ENCODE measurements at regions of chr19 and their contacts with region 1.

Region 1: DNA sequence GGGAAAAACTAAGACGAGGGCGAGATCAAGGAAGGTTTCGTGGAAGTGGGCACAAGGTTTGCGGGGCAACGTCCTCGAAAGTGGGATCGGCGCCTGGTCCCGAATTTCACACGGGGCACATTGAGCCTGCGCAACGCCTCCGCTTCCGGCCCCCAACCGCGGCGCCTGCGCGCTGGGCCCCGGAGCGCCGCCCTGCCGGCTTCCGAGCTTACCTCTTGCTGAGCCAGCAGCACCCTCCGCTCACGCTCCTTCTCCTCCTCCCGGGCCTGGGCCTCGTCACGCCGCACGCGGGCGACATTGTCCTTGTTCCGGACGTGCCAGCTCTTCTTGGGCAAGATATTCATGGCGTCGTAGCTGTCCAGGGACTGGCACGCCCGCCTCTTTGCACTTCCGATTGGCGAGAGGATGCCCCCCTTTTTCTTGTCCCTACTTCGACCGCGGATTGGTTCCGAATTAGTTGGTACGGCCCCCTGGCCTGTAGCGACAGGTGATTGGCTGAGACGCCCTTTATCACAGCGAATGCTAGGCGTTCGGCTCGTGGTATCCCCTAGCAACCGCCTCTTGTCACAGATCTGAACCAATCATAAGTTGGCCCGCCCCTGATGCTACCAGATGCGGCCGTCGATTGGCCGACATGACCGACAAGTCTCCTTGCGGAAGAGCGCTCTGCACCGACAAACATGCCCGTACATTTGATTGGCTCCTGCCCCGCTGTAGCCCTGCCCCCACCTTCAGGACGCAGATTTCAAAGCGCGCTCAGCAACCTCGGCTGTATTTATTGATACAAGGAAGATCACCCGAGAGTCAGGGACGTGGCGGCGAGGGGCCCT is at the start of gene LENG1:
- DNase-seq: peak; percentile 89 to 100 (median 99)
- ATAC-seq: peak; percentile 86 to 89
- H3K4me3 Mint-ChIP-seq: peak within 1 kb of the TSS; percentile 91 to 100 (median 100)
- H3K27ac Mint-ChIP-seq: peak within 1 kb of the TSS; percentile 99 to 100 (median 99)
- H3K4me1 Mint-ChIP-seq: peaks cover 32 to 77% (median 73%) of the 10 kb centered on the region in 4 donors
- H3K27me3 Mint-ChIP-seq: peaks cover 0 to 2% (median 0%) of the 10 kb centered on the region in 5 donors
- polyA plus RNA-seq, gene LENG1: 7.7 to 13.9 (median 9.3) TPM

Region 2: DNA sequence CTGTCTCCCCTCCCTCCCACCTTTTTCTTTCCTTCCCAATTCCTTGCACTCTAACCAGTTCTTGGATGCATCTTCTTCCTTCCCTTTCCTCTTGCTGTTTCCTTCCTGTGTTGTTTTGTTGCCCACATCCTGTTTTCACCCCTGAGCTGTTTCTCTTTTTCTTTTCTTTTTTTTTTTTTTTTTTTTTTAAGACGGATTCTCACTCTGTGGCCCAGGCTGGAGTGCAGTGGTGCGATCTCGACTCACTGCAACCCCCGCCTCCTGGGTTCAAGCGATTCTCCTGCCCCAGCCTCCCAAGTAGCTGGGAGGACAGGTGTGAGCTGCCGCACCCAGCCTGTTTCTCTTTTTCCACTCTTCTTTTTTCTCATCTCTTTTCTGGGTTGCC is 285.0 kb before region 1 on chr19:
- POLR2A ChIA-PET with region 1: no interaction called
- DNase-seq: peak in 3 of 10 donors; percentile 30 to 55 (median 55)
- ATAC-seq: peak in 1 of 2 donors; percentile 13
- H3K4me3 Mint-ChIP-seq: peak overlapping the region; percentile 63 to 83 (median 72)
- H3K27ac Mint-ChIP-seq: peak overlapping the region; percentile 94 to 99 (median 96)
- H3K4me1 Mint-ChIP-seq: peaks cover 39 to 83% (median 74%) of the 10 kb centered on the region in 4 donors
- H3K27me3 Mint-ChIP-seq: peaks cover 0 to 5% (median 0%) of the 10 kb centered on the region in 5 donors

Region 3: GRCh38 chr19:54115109-54116063 is 44.2 kb before region 1 on chr19 and contains the starts of genes PRPF31 and TFPT:
- POLR2A ChIA-PET with region 1: interaction called, 31 read pairs
- DNase-seq: peak; percentile 79 to 100 (median 96)
- ATAC-seq: peak; percentile 87 to 89
- H3K4me3 Mint-ChIP-seq: peak within 1 kb of the TSS; percentile 87 to 98 (median 93)
- H3K27ac Mint-ChIP-seq: peak within 1 kb of the TSS; percentile 89 to 99 (median 95)
- H3K4me1 Mint-ChIP-seq: peaks cover 16 to 50% (median 36%) of the 10 kb centered on the region in 4 donors
- H3K27me3 Mint-ChIP-seq: peaks cover 0 to 4% (median 0%) of the 10 kb centered on the region in 5 donors
- polyA plus RNA-seq, gene PRPF31: 64.0 to 82.4 (median 80.8) TPM
- polyA plus RNA-seq, gene TFPT: 17.4 to 24.4 (median 23.0) TPM

Region 4: GRCh38 chr19:54137086-54137921 is 22.3 kb before region 1 on chr19 and contains the start of gene CNOT3:
- POLR2A ChIA-PET with region 1: interaction called, 129 read pairs
- DNase-seq: peak; percentile 95 to 100 (median 100)
- ATAC-seq: peak; percentile 80
- H3K4me3 Mint-ChIP-seq: peak within 1 kb of the TSS; percentile 78 to 94 (median 91)
- H3K27ac Mint-ChIP-seq: peak within 1 kb of the TSS; percentile 87 to 98 (median 92)
- H3K4me1 Mint-ChIP-seq: peaks cover 29 to 54% (median 52%) of the 10 kb centered on the region in 4 donors
- H3K27me3 Mint-ChIP-seq: no peaks in the 10 kb centered on the region
- polyA plus RNA-seq, gene CNOT3: 6.6 to 14.5 (median 7.9) TPM

Region 5: DNA sequence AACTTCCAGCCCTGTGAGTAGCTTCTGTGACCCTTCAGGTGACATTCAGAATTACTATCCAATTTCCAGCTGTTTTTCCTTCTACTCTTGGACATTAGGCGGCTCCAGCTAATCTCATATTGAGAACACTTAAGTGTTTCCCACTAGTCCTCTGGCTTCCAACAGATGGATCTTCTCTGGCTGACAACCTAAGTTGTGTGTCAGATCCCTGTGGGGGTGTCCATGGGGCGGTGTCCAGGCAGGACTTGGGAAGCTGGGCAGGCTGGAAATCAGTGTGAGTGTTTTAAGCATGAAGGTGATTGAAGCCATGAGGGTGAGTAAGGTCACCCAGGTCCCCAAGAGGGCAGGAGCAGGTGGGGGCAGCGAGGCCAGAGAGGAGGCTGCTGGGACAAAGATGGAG is 11.9 kb before region 1 on chr19:
- POLR2A ChIA-PET with region 1: interaction called, 19 read pairs
- DNase-seq: no peak
- ATAC-seq: no peak
- H3K4me3 Mint-ChIP-seq: no peak overlapping the region
- H3K27ac Mint-ChIP-seq: peak overlapping the region in 2 of 10 donors; percentile 20 to 40
- H3K4me1 Mint-ChIP-seq: peaks cover 0 to 30% (median 12%) of the 10 kb centered on the region in 4 donors
- H3K27me3 Mint-ChIP-seq: no peaks in the 10 kb centered on the region

Region 6: DNA sequence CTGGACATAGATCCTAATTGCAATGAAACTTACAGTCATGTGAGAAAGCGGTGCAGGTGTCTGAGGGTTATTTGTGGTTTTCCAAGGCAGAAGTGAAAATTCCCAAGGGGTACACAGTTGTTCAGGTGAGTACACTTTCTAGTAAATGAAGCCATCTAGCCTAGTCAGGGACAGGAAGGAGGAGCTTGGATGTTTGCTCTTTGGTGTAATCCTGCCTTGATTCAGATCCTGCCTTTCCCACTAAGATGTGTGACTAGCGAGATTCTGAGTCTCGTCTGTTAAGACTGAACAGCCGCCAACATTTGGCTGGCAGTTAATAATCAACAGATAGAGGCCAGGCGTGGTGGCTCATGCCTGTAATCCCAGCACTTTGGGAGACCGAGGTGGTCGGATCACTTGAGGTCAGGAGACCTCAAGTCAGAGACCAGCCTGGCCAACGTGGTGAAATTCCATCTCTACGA is 43.6 kb after region 1 on chr19:
- POLR2A ChIA-PET with region 1: interaction called, 19 read pairs
- DNase-seq: no peak
- ATAC-seq: no peak
- H3K4me3 Mint-ChIP-seq: peak overlapping the region; percentile 9 to 100 (median 93)
- H3K27ac Mint-ChIP-seq: peak overlapping the region in 5 of 10 donors; percentile 31 to 68 (median 46)
- H3K4me1 Mint-ChIP-seq: peaks cover 18 to 83% (median 65%) of the 10 kb centered on the region in 4 donors
- H3K27me3 Mint-ChIP-seq: no peaks in the 10 kb centered on the region

Region 7: GRCh38 chr19:54297760-54298305 is 138.3 kb after region 1 on chr19:
- POLR2A ChIA-PET with region 1: no interaction called
- DNase-seq: no peak
- ATAC-seq: no peak
- H3K4me3 Mint-ChIP-seq: no peak overlapping the region
- H3K27ac Mint-ChIP-seq: peak overlapping the region in 1 of 10 donors; percentile 30
- H3K4me1 Mint-ChIP-seq: peaks cover 0 to 3% (median 0%) of the 10 kb centered on the region in 4 donors
- H3K27me3 Mint-ChIP-seq: peaks cover 8 to 29% (median 20%) of the 10 kb centered on the region in 5 donors

Region 8: DNA sequence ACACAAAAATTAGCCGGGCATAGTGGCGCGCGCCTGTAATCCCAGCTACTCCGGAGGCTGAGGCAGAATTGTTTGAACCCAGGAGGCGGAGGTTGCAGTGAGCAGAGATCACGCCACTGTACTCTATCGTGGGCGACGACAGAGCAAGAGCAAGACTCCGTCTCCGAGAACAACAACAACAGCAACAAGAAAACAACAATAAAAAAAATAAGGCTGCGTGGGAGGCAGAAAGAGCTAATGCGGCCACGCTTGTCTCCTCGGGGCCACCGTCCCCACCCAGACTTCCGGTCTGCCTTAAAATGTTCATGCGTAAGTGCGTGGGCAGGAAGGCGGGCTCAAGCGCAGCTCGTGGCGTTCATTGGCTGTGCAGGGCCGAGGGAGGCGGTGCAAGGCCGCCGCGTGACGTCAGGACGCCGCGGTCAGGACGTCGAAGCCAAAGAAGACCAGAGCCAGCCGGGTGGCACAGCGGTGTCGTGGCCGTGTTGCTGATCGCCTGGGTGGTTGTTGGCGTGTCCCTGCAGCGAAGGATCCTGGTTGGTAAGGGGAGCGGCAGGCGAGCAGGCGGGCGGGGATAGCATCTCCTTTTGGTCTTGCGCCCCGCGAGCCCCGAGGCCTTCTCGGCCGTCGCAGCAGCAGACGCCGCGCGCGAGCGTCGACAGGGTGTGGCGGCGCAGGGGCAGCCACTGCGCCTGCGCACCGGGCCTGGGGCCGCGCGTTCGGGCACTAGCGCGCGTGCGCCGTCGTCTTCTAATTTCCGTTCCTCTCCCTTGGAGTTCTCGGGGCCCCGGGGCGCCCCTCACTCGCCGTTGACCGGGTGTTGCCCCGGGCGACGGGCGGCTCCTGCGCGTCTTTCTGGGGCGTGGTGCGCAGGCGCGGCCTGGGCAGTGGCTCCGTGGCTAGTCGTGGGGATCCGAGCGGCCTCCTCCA is 289.5 kb after region 1 on chr19 and contains the start of gene LENG8:
- POLR2A ChIA-PET with region 1: interaction called, 11 read pairs
- DNase-seq: peak; percentile 95 to 99 (median 98)
- ATAC-seq: peak; percentile 88 to 92
- H3K4me3 Mint-ChIP-seq: peak within 1 kb of the TSS; percentile 92 to 100 (median 98)
- H3K27ac Mint-ChIP-seq: peak within 1 kb of the TSS; percentile 99 to 100 (median 100)
- H3K4me1 Mint-ChIP-seq: peaks cover 28 to 68% (median 57%) of the 10 kb centered on the region in 4 donors
- H3K27me3 Mint-ChIP-seq: peaks cover 0 to 3% (median 0%) of the 10 kb centered on the region in 5 donors
- polyA plus RNA-seq, gene LENG8: 4.5 to 8.6 (median 6.5) TPM

Region 9: GRCh38 chr19:55426042-55426441 is 1266.5 kb after region 1 on chr19:
- POLR2A ChIA-PET with region 1: no interaction called
- DNase-seq: no peak
- ATAC-seq: no peak
- H3K4me3 Mint-ChIP-seq: no peak overlapping the region
- H3K27ac Mint-ChIP-seq: no peak overlapping the region
- H3K4me1 Mint-ChIP-seq: peaks cover 8 to 25% (median 16%) of the 10 kb centered on the region in 4 donors
- H3K27me3 Mint-ChIP-seq: peaks cover 8 to 39% (median 23%) of the 10 kb centered on the region in 5 donors

Measured in naive thymus-derived CD8-positive, alpha-beta T cell (primary cell).